ENCODE measurements at regions of chr9 and their contacts with region 1.

Region 1: GRCh38 chr9:122125158-122125508 is 32.0 kb upstream of the TTLL11 start:
- DNase-seq: peak; percentile 77
- H3K4me3 ChIP-seq: no peak overlapping the region
- H3K27ac ChIP-seq: no peak overlapping the region
- H3K4me1 ChIP-seq: peaks cover 20% of the 10 kb centered on the region
- H3K27me3 ChIP-seq: no peaks in the 10 kb centered on the region
- CTCF ChIP-seq: peak; percentile 85 to 95
- POLR2A ChIP-seq: no peak

Region 2: DNA sequence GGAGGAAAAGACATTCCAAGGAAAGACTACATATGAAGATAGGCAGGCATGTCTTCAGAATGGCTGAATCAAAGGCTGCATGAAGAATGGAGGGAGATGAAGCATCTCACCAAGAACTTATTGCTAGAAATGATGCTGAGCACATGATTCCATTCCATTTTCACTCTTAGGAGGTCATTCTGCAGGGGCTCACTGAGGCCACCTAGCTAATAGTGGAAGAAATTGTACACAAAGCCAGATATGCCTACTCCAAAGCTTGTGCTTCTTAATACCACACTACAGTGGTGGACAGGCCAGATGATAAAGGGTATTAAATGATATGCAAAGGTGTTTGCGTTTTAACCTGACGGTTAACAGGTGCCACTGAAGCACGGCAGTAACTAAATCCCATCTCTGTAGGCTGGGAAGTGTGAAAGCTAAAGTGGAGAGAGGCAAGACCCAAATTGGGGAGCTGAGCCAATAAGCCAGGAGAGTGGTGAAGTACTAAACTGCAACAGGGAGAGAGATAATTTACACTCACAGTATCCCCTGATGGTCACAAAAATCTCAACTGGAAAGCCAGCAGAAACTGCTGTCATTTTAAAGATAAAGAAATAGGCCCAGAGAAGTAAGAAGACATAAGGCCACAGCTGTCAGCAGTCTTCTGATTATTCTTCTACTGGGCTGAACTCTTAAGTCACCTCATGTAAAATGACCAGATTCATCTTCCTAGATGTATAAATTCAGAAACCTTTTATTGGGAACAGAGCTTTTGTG is 19.9 kb after region 1 on chr9:
- CTCF ChIA-PET with region 1: interaction called, 94 read pairs
- POLR2A ChIA-PET with region 1: no interaction called
- dilution Hi-C with region 1: no loop called
- intact Hi-C with region 1: loop called (anchors 2 kb)
- DNase-seq: peak; percentile 60
- H3K4me3 ChIP-seq: no peak overlapping the region
- H3K27ac ChIP-seq: no peak overlapping the region
- H3K4me1 ChIP-seq: peaks cover 45% of the 10 kb centered on the region
- H3K27me3 ChIP-seq: no peaks in the 10 kb centered on the region
- CTCF ChIP-seq: peak; percentile 53 to 62
- POLR2A ChIP-seq: no peak

Region 3: DNA sequence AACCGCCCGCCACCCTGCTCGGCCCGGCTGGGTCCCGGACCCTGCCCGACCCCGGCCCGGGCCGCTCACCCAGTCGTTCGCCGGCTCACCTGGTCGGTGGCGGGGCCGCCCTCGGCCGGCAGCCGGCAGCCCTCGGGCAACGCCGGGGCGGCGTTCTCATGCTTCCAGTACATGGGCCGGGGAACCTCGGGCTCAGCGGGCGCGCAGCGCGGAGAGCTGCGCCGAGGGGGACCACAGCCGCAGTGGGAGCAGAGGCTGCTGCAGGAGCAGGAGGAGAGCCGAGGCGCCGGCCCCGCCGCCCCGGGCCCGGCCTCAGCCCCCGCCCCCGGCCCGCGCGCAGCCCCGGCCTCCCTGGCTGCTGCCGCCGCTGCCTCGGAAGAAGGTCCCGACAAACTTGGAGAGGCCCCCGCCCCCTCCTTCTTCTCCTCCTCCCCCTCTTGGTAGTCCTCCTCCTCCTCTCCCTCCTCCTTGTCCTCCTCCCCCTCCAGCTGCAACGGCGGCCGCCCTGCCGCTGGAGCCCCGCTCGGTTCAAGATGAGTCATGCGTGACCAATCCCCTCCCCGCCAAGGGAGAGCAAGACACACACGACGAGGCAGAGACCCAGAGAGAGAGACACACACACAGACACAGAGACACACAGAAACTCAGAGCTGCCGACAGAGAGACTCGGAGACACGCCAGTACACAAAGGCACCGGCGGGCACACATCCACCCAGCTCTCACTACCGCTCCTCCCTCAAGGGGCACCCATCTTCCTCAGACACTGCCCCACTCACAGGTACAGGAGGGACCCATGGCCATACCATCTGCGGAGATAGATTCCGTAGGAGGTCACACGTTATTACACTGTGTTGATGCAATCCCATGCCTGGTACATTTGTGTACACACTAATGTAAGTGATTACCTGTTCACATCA is 103.7 kb after region 1 on chr9 and contains the start of gene LHX6:
- CTCF ChIA-PET with region 1: interaction called, 6 read pairs
- POLR2A ChIA-PET with region 1: no interaction called
- dilution Hi-C with region 1: no loop called
- intact Hi-C with region 1: loop called (anchors 1 kb)
- DNase-seq: peak; percentile 43
- H3K4me3 ChIP-seq: peak within 1 kb of the TSS; percentile 18 to 55 (median 41)
- H3K27ac ChIP-seq: no peak within 1 kb of the TSS
- H3K4me1 ChIP-seq: peaks cover 10% of the 10 kb centered on the region
- H3K27me3 ChIP-seq: peaks cover 42 to 54% of the 10 kb centered on the region in 2 experiments
- CTCF ChIP-seq: no peak
- POLR2A ChIP-seq: no peak
- total RNA-seq, gene LHX6: 9.4 and 18.4 TPM in 2 replicates

Region 4: DNA sequence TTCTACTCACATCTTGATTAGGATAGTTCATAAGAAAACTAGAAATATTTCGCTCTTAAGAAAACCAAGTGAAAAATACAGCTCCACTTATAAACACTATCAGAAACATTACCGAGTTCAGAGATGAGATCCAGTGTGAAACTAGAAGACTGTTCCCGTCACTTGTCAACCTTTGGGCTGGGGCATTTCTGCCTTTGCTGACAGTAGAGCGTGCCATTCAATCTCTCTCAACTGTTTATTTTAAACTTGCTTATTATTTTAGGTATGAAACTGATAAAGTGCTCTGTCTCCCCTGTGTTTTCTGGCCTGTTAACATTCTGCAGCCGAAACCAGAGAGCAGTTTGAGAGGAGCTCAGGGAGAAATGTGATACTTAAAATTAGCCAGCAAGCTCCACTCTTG is 156.2 kb after region 1 on chr9:
- CTCF ChIA-PET with region 1: interaction called, 12 read pairs
- POLR2A ChIA-PET with region 1: no interaction called
- dilution Hi-C with region 1: no loop called
- intact Hi-C with region 1: no loop called
- DNase-seq: no peak
- H3K4me3 ChIP-seq: no peak overlapping the region
- H3K27ac ChIP-seq: peak overlapping the region; percentile 30
- H3K4me1 ChIP-seq: peaks cover 18% of the 10 kb centered on the region
- H3K27me3 ChIP-seq: no peaks in the 10 kb centered on the region
- CTCF ChIP-seq: no peak
- POLR2A ChIP-seq: no peak

Region 5: DNA sequence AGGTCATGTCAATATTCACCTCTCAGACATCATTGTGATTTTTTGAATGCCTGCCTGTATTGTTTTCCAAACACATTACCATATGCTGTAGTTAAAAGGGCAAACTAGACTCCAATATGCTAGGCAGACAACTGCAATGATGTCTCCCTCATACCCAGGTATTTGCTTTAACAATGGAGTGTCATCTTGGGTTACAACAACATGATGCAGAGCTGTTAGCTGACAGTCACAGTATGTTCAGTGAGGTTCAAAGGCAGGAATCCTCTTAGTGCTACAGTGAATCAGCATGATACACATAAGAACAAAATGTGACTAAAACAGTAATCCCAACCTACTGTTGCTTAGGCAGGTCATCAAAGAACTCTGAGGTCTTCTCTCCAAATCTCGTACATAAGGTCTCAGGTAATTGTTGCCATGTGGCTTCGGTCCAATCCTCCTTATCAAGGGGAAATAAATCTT is 328.6 kb after region 1 on chr9:
- CTCF ChIA-PET with region 1: interaction called, 30 read pairs
- POLR2A ChIA-PET with region 1: no interaction called
- dilution Hi-C with region 1: no loop called
- intact Hi-C with region 1: loop called (anchors 1 kb)
- DNase-seq: peak; percentile 27
- H3K4me3 ChIP-seq: no peak overlapping the region
- H3K27ac ChIP-seq: no peak overlapping the region
- H3K4me1 ChIP-seq: peaks cover 6% of the 10 kb centered on the region
- H3K27me3 ChIP-seq: peaks cover 2 to 7% of the 10 kb centered on the region in 2 experiments
- CTCF ChIP-seq: no peak
- POLR2A ChIP-seq: no peak

Region 6: DNA sequence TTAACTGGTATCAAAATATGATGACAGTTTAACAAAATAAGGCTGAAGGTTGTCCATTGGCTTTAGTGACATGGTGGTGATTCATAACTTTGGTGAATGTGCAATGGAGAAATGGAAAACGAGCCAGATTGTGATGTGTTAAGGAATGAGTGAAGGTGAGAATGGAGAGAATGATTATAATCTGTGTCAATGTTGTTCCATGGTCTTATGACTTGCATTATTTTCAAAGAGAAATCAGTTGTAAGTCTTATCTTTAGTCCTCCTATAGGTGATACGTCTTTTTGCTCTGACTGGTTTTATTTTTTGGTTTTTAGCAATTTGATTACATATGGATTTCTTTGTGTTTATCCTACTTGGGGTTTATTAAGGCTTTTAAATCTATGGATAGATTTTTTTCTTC is 629.7 kb after region 1 on chr9:
- CTCF ChIA-PET with region 1: no interaction called
- POLR2A ChIA-PET with region 1: no interaction called
- dilution Hi-C with region 1: no loop called
- intact Hi-C with region 1: no loop called
- DNase-seq: no peak
- H3K4me3 ChIP-seq: no peak overlapping the region
- H3K27ac ChIP-seq: no peak overlapping the region
- H3K4me1 ChIP-seq: no peaks in the 10 kb centered on the region
- H3K27me3 ChIP-seq: no peaks in the 10 kb centered on the region
- CTCF ChIP-seq: no peak
- POLR2A ChIP-seq: no peak

Measured in endothelial cell of umbilical vein (primary cell).